ENCODE measurements at regions of chr10 and their contacts with region 1.

Region 1: GRCh38 chr10:114043532-114044246 is at the start of gene ADRB1:
- DNase-seq: peak; percentile 93 to 94
- ATAC-seq: peak; percentile 88 to 94 (median 91)
- H3K4me3 ChIP-seq: peak within 1 kb of the TSS; percentile 47 to 66 (median 60)
- H3K27ac ChIP-seq: peak within 1 kb of the TSS; percentile 74 to 92 (median 89)
- H3K4me1 ChIP-seq: peaks cover 0 to 25% (median 7%) of the 10 kb centered on the region in 9 donors
- H3K27me3 ChIP-seq: peaks cover 0 to 82% (median 10%) of the 10 kb centered on the region in 7 donors
- CTCF ChIP-seq: no peak
- total RNA-seq, gene ADRB1: 24.4 to 98.7 (median 40.6) TPM

Region 2: DNA sequence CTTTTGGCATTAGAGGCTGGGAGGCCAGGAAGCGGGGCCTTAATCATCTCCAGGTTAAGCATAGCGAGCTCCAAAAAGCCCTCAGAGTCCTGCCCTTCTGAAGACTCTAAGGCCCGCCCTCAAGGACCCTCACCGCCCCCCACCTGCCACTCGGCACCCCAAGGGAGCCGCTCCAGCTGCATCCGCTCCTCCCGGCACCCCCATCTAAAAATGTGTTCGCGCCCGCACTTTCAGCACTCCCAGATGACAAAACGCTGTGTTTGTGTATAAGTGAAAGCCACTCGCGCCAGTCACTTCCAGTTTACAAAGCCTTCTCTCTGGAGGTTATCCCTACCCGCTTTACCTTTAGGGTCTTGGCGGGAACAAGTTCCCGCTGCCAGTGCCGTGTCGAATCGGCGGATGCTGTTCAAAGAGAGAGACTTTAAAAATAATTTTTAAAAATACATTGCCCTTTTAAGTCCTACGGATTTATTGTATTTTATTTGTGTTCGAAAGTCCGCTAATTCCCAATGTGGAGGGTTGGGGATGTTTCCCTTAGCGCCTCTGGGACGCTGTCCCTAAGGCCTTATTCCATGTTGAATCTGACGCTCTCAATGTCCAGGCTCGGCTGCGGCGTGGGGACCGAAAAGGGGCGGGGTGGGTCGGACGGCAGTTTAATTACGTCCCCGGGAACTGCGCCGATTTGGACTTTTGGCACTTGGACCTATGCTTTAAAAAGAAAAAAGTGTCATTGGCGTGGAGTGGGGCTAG is 189.5 kb before region 1 on chr10 and contains the starts of genes DCLRE1A and NHLRC2:
- intact Hi-C with region 1: loop called in 6 of 10 experiments (anchors 2 to 10 kb)
- DNase-seq: peak; percentile 78 to 85
- ATAC-seq: peak; percentile 84 to 94 (median 88)
- H3K4me3 ChIP-seq: peak within 1 kb of the TSS; percentile 74 to 99 (median 90)
- H3K27ac ChIP-seq: peak within 1 kb of the TSS; percentile 81 to 97 (median 96)
- H3K4me1 ChIP-seq: peaks cover 0 to 66% (median 51%) of the 10 kb centered on the region in 9 donors
- H3K27me3 ChIP-seq: no peaks in the 10 kb centered on the region
- CTCF ChIP-seq: no peak
- total RNA-seq, gene DCLRE1A: 4.6 to 7.5 (median 5.7) TPM
- total RNA-seq, gene NHLRC2: 58.0 to 98.0 (median 72.0) TPM

Region 3: GRCh38 chr10:113907166-113907565 is 136.5 kb before region 1 on chr10:
- intact Hi-C with region 1: loop called in 1 of 10 experiments (anchors 10 kb)
- DNase-seq: no peak
- ATAC-seq: no peak
- H3K4me3 ChIP-seq: no peak overlapping the region
- H3K27ac ChIP-seq: no peak overlapping the region
- H3K4me1 ChIP-seq: no peaks in the 10 kb centered on the region
- H3K27me3 ChIP-seq: no peaks in the 10 kb centered on the region
- CTCF ChIP-seq: no peak

Region 4: DNA sequence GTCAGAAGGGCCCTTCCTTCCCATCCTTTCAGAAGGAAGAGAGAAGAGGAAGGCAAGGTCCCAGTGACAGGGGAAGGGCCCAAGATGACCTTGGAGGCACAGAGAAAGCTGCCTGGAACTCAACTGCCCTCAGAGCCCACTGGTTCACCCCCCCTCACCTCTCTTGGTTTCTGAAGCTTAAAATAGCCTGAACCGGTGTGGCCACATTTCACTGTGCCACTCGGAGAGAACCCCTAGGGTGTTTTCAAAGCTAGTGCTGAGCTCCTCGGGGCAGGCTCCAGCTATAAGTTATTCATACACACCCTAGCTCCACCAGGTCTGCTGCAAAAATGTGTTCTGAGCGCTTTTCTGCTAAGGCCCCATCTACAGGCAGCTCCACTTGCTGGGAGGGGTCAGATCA is 60.9 kb before region 1 on chr10:
- intact Hi-C with region 1: loop called in 2 of 10 experiments (anchors 5 kb)
- DNase-seq: no peak
- ATAC-seq: peak in 7 of 8 donors; percentile 38 to 72 (median 57)
- H3K4me3 ChIP-seq: no peak overlapping the region
- H3K27ac ChIP-seq: peak overlapping the region in 6 of 10 donors; percentile 1 to 61 (median 40)
- H3K4me1 ChIP-seq: peaks cover 0 to 26% (median 17%) of the 10 kb centered on the region in 9 donors
- H3K27me3 ChIP-seq: no peaks in the 10 kb centered on the region
- CTCF ChIP-seq: no peak

Region 5: GRCh38 chr10:114068054-114068707 is 24.5 kb after region 1 on chr10:
- intact Hi-C with region 1: loop called in 2 of 10 experiments (anchors 2 kb)
- DNase-seq: peak in 1 of 2 donors; percentile 19
- ATAC-seq: peak in 2 of 8 donors; percentile 33 to 44
- H3K4me3 ChIP-seq: no peak overlapping the region
- H3K27ac ChIP-seq: peak overlapping the region in 9 of 10 donors; percentile 48 to 87 (median 79)
- H3K4me1 ChIP-seq: peaks cover 4 to 57% (median 38%) of the 10 kb centered on the region in 9 donors
- H3K27me3 ChIP-seq: no peaks in the 10 kb centered on the region
- CTCF ChIP-seq: no peak

Region 6: GRCh38 chr10:114103284-114103683 is 59.6 kb after region 1 on chr10:
- intact Hi-C with region 1: loop called in 3 of 10 experiments (anchors 2 to 5 kb)
- DNase-seq: no peak
- ATAC-seq: peak; percentile 39 to 72 (median 64)
- H3K4me3 ChIP-seq: no peak overlapping the region
- H3K27ac ChIP-seq: no peak overlapping the region
- H3K4me1 ChIP-seq: peaks cover 0 to 27% (median 11%) of the 10 kb centered on the region in 9 donors
- H3K27me3 ChIP-seq: peaks cover 0 to 18% (median 0%) of the 10 kb centered on the region in 7 donors
- CTCF ChIP-seq: peak; percentile 13 to 75 (median 64)